Activated CD8-positive, alpha-beta memory T cell treated with anti-CD3 and anti-CD28 coated beads, Interleukin-2, amount 10 ng/mL, durations not matched to agents 7 days and 5 days (primary cell): ENCODE measurements at regions of chr19 and their contacts with region 1.

Region 1: DNA sequence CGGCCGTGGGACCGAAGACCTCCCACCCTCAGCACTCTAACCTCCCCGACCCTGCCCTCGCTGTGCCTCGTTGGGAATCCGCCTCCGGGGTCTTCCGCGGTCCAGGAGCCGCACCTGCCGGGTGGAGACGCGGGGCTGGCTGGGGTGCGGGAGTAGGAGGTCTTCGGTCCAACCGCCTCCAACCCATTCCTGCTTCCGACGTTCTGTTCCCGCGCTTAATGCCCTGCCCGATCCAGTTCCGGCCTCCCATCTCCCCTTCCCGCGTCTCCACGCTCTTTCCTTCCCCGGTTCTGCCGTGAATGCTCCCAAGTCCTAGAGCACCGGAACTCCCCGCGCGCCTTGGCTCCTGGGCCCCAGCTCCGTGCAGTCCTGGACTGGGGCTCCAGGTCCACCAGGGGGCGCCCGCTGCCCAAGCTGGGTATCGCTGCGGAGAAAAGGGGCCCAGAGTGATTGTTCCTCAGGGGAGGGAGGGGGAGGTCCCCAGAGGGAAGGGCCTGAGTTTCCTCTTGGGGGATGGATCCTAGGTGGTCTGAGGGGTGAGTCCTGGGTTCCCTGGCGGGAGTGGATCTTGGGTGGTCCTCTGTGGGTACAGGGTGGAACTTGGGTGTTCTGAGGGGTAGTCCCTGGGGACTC is 14.1 kb upstream of the TNFSF9 start:
- DNase-seq: peak; percentile 95
- ATAC-seq: peak; percentile 81
- H3K4me3 Mint-ChIP-seq: peak overlapping the region; percentile 89
- H3K27ac Mint-ChIP-seq: peak overlapping the region; percentile 96
- H3K4me1 Mint-ChIP-seq: peaks cover 41% of the 10 kb centered on the region
- H3K27me3 Mint-ChIP-seq: no peaks in the 10 kb centered on the region

Region 2: GRCh38 chr19:6259312-6259861 is 257.4 kb before region 1 on chr19:
- CTCF ChIA-PET with region 1: no interaction called
- DNase-seq: no peak
- ATAC-seq: no peak
- H3K4me3 Mint-ChIP-seq: no peak overlapping the region
- H3K27ac Mint-ChIP-seq: no peak overlapping the region
- H3K4me1 Mint-ChIP-seq: peaks cover 15% of the 10 kb centered on the region
- H3K27me3 Mint-ChIP-seq: no peaks in the 10 kb centered on the region

Region 3: GRCh38 chr19:6501740-6502648 is 14.8 kb before region 1 on chr19 and contains the start of gene TUBB4A:
- CTCF ChIA-PET with region 1: interaction called, 11 read pairs
- DNase-seq: peak; percentile 65
- ATAC-seq: peak; percentile 76
- H3K4me3 Mint-ChIP-seq: peak within 1 kb of the TSS; percentile 73
- H3K27ac Mint-ChIP-seq: no peak within 1 kb of the TSS
- H3K4me1 Mint-ChIP-seq: peaks cover 32% of the 10 kb centered on the region
- H3K27me3 Mint-ChIP-seq: peaks cover 9% of the 10 kb centered on the region
- total RNA-seq, gene TUBB4A: 7.5 to 8.1 TPM

Region 4: DNA sequence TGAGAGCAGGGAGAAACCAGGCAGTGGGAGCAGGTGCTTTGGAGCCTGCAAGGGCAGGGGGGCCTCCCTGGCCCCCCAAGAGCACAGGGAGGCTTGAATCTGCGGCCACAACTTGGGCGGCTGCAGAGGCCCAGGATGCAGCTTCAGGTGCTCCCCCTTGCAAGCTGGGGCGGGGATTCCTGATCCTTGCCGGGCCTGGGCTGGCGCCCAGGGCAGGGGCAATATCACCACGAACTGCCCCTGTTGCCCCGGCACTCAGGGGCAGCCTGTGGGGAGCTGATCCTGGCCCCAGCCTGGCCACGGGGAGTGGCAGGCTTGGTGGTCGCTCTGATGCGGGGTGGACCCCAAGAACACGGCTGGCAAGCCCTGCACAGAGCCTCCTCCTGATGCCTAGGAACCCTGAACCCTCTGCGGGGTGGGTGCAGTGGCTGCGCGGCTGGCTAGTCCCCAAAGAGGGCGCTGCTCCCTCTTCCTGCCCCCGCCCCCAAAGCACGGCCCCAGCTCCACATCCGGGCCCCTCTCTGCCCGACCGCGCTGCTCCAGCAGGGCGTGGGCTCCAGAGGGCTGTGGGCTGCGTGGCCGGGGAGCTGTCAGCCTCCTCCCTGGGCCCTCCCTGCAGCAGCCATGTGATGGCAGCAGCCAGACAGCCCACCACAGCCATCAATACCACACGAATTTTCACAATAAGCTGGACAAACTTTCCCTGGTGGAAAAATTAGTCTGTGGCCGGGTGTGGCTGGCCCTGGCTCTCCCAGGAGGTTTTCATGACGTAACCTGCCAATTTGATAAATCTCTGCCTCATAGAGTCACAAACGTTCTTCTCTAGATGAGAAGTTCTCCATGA is 35.1 kb after region 1 on chr19:
- CTCF ChIA-PET with region 1: interaction called, 12 read pairs
- DNase-seq: peak; percentile 89
- ATAC-seq: peak; percentile 98
- H3K4me3 Mint-ChIP-seq: no peak overlapping the region
- H3K27ac Mint-ChIP-seq: peak overlapping the region; percentile 57
- H3K4me1 Mint-ChIP-seq: peaks cover 30% of the 10 kb centered on the region
- H3K27me3 Mint-ChIP-seq: peaks cover 3% of the 10 kb centered on the region

Region 5: DNA sequence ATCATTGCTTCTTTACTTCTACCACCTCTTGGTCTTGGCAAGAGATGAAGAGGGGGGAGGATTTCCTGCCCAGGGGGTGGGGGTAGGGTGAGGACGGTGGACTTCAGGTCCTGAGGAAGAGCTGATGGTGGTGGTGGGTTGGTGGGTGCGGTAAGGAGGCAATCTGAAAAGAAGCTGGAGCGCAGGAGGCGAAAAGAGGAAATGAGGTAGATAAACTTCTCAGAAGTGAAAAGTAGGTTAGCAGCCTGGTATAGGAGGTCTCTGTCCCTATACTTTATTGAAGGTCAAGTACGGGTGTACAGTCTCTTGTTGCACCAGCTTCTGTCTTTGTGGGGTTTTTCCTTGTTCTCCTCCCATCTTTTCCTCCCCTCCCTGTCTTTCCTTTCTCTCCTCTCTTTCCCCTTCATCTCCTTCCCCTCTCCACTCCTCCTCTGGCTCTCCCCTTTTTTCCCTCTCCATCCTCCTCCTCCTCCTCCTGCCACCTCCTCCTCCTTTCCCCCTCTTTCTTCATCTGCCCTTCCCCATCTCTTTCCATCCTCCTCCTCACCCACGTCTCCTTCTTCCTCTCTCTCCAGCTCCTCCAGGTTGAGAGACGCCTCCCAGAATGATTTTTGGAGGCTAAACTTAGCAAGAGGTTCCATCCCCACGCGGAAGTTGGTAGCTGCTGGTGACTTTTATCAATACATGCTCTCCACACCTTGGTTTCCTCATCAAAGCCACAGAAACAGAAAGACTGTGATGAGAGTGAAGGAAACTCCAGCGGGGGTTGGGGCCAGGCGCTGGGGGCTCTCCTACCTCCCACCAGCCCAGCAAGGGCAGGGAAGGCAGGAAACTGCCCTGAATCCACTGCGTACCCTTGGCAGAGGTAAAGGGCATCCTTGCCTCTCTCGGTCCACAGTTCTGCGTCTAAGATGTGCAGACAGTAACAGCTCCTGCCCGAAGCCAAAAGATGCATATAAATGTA is 137.9 kb after region 1 on chr19:
- CTCF ChIA-PET with region 1: interaction called, 10 read pairs
- DNase-seq: peak; percentile 87
- ATAC-seq: peak; percentile 83
- H3K4me3 Mint-ChIP-seq: peak overlapping the region; percentile 70
- H3K27ac Mint-ChIP-seq: peak overlapping the region; percentile 96
- H3K4me1 Mint-ChIP-seq: peaks cover 57% of the 10 kb centered on the region
- H3K27me3 Mint-ChIP-seq: no peaks in the 10 kb centered on the region

Region 6: DNA sequence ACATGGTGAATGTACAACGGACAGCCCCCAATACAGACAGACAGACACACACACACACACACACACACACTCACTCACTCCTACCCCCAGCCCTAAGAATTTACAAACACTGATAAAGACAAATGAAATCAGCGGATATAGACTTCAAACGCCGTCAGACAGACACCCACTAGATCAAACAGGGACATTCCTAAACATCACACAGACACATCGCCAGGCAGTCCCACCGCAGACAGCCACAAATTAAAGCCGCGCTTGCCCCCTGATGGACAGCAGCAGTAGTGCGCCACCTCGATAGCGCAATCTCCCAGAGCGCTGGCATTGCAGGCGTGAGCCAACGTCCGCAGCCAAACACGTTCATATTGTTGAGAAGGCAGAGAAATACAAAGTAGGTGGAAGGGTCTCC is 345.9 kb after region 1 on chr19:
- CTCF ChIA-PET with region 1: interaction called, 53 read pairs
- DNase-seq: peak; percentile 94
- ATAC-seq: peak; percentile 88
- H3K4me3 Mint-ChIP-seq: peak overlapping the region; percentile 72
- H3K27ac Mint-ChIP-seq: peak overlapping the region; percentile 82
- H3K4me1 Mint-ChIP-seq: peaks cover 12% of the 10 kb centered on the region
- H3K27me3 Mint-ChIP-seq: no peaks in the 10 kb centered on the region